ENCODE measurements at regions of chr2 and their contacts with region 1.

Region 1: GRCh38 chr2:21220930-21221329 is 97.2 kb downstream of the TDRD15 start:
- DNase-seq: no peak
- ATAC-seq: no peak
- H3K4me3 ChIP-seq: no peak overlapping the region
- H3K27ac ChIP-seq: no peak overlapping the region
- H3K4me1 ChIP-seq: no peaks in the 10 kb centered on the region
- H3K27me3 ChIP-seq: no peaks in the 10 kb centered on the region
- CTCF ChIP-seq: no peak
- POLR2A ChIP-seq: no peak
- RAD21 ChIP-seq: no peak

Region 2: GRCh38 chr2:21245565-21245964 is 24.6 kb after region 1 on chr2:
- CTCF ChIA-PET with region 1: interaction called, 3 read pairs
- POLR2A ChIA-PET with region 1: no interaction called
- dilution Hi-C with region 1: no loop called
- in situ Hi-C with region 1: no loop called
- intact Hi-C with region 1: loop called (anchors 1 kb)
- DNase-seq: no peak
- ATAC-seq: no peak
- H3K4me3 ChIP-seq: no peak overlapping the region
- H3K27ac ChIP-seq: no peak overlapping the region
- H3K4me1 ChIP-seq: no peaks in the 10 kb centered on the region
- H3K27me3 ChIP-seq: no peaks in the 10 kb centered on the region
- CTCF ChIP-seq: no peak
- POLR2A ChIP-seq: no peak
- RAD21 ChIP-seq: no peak

Region 3: DNA sequence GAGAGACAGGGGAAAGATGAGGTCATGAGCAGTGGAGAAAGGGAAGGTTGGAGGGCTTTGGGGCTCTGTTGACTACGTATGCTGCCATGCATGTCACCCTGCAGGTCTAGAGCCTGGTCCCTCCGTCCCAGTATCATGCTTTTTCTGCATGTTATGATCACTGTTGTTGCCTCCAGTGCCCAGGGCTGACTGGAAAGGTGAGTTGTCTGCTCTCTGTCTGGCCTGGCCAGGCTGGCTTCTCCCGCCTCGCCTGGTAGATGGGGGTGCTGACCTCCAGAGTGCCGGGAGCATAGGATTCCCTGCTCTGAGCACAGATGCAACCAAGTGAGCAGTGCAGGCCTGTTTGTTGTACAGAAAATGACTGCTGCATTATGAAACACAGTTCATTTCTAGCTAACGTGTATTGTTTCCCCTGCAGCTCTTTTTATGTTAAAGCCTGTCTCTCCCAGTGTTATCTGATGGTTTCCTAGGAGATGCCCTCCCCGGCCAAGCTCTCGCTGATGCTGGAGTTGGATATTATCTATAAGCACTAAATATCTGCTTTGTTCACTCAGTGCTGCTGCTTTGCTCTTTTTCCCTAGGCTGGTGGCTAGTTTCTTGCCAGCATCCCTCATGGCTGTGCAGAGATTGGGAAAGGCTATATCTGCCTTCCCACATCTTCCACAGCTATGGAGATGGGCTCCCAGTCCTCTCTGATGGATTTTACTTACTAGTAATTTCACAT is 61.0 kb after region 1 on chr2:
- CTCF ChIA-PET with region 1: no interaction called
- POLR2A ChIA-PET with region 1: no interaction called
- dilution Hi-C with region 1: no loop called
- in situ Hi-C with region 1: no loop called
- intact Hi-C with region 1: no loop called
- DNase-seq: no peak
- ATAC-seq: no peak
- H3K4me3 ChIP-seq: no peak overlapping the region
- H3K27ac ChIP-seq: no peak overlapping the region
- H3K4me1 ChIP-seq: no peaks in the 10 kb centered on the region
- H3K27me3 ChIP-seq: no peaks in the 10 kb centered on the region
- CTCF ChIP-seq: no peak
- POLR2A ChIP-seq: no peak
- RAD21 ChIP-seq: no peak

Measured in IMR-90 (cell line).